ENCODE measurements at regions of chr15 and their contacts with region 1.

Region 1: GRCh38 chr15:98779463-98780071 is 131.2 kb downstream of the IGF1R start:
- DNase-seq: peak; percentile 84
- ATAC-seq: peak; percentile 84
- H3K4me3 Mint-ChIP-seq: peak overlapping the region; percentile 20
- H3K27ac Mint-ChIP-seq: no peak overlapping the region
- H3K4me1 Mint-ChIP-seq: peaks cover 37% of the 10 kb centered on the region
- H3K27me3 Mint-ChIP-seq: no peaks in the 10 kb centered on the region
- CTCF ChIP-seq: peak; percentile 94

Region 2: DNA sequence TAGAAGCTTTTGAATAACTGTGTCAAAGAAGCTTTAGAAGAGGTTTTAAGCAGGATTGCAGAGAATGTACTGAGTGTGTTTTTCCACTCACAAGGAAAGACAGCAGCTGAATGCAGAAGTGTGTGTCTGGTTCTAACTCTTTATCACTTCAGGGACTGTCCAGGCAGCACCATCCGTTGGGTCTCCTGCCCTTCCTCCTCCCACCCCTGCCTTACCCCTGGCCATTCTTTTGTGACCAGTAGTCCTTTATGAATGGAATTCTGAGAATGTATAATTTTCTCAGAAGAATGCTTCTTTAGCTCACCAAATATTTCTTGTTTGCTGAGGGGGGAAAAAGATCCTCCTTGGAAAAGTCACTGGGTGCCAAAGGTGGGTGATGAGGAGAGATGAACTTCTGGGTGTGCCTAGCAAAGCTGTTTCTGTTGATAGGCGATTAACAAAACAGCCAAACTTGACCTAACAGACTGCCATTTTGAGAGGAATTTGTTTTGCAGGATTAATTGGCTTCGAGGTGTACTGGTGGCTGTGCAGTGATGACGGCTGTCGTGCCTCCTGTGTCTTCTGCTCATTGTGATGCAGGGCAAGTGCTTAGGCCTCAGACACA is 60.3 kb before region 1 on chr15:
- CTCF ChIA-PET with region 1: interaction called, 11 read pairs
- POLR2A ChIA-PET with region 1: no interaction called
- intact Hi-C with region 1: no loop called
- DNase-seq: no peak
- ATAC-seq: no peak
- H3K4me3 Mint-ChIP-seq: no peak overlapping the region
- H3K27ac Mint-ChIP-seq: no peak overlapping the region
- H3K4me1 Mint-ChIP-seq: peaks cover 57% of the 10 kb centered on the region
- H3K27me3 Mint-ChIP-seq: no peaks in the 10 kb centered on the region
- CTCF ChIP-seq: no peak

Region 3: DNA sequence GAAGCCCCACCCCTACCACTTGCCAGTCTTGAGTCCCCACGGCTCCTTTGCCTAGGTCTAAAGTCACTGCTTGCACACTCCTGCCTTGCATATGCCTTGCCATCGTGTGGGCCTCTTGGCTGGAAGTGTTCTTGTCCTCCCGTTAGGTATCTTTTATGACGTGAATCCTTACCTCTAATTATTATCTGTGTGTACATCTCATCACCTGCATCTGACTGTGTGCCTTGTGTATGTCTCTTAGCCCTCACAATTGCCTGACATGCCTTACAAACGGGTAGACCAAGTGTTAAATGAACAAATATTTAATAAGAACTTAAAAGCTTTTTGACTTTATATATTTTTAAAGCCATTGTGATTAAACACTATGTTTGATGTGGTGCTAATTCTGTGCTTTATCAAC is 87.8 kb after region 1 on chr15:
- CTCF ChIA-PET with region 1: no interaction called
- POLR2A ChIA-PET with region 1: no interaction called
- intact Hi-C with region 1: no loop called
- DNase-seq: no peak
- ATAC-seq: no peak
- H3K4me3 Mint-ChIP-seq: no peak overlapping the region
- H3K27ac Mint-ChIP-seq: no peak overlapping the region
- H3K4me1 Mint-ChIP-seq: peaks cover 20% of the 10 kb centered on the region
- H3K27me3 Mint-ChIP-seq: no peaks in the 10 kb centered on the region
- CTCF ChIP-seq: no peak

Measured in activated CD8-positive, alpha-beta T cell treated with anti-CD3 and anti-CD28 coated beads for 36 hours (primary cell).